AG04450 (cell line): ENCODE measurements at regions of chr11 and their contacts with region 1.

Region 1: DNA sequence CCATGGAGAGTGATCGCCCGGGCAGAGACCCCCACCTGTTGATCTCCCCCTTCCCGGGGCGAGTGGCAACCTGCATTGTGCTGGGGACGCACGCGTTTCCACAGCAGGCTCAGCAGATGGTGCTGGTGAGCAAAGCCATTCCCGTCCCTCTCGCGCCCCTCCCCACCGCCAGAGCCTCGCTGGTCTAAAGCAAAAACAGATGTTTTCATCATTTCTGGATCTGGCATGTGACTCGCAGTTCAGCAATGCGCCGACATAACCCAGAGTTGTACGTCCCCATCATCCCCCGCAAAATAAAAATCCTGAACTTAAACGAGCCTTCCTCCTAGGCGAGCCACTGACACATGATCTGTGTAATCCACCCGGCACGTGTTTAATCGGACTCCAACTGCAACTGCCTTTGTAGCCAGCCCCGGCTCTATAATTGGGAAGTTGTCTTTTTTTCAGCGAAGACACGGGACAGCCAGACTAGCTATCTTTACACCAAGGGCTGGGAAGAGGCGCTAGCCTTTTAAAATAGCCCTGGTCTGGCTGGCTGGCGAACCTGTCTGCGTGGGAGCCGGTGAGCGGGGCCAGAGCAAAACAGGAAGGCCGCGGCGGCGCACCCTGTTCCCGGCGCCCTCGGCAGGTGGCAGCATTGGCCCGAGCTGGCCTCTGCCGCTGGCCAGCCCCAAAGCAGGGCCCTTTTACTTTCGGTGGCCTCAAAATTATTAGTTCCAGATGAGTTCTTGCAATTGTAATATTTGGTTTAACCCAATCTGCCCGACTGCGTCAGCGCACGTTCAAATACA is 203.0 kb upstream of the SORL1-AS1 start:
- DNase-seq: peak; percentile 97
- H3K4me3 ChIP-seq: peak overlapping the region; percentile 57
- H3K27ac ChIP-seq: peak overlapping the region; percentile 100
- H3K27me3 ChIP-seq: no peaks in the 10 kb centered on the region
- CTCF ChIP-seq: peak; percentile 94

Region 2: DNA sequence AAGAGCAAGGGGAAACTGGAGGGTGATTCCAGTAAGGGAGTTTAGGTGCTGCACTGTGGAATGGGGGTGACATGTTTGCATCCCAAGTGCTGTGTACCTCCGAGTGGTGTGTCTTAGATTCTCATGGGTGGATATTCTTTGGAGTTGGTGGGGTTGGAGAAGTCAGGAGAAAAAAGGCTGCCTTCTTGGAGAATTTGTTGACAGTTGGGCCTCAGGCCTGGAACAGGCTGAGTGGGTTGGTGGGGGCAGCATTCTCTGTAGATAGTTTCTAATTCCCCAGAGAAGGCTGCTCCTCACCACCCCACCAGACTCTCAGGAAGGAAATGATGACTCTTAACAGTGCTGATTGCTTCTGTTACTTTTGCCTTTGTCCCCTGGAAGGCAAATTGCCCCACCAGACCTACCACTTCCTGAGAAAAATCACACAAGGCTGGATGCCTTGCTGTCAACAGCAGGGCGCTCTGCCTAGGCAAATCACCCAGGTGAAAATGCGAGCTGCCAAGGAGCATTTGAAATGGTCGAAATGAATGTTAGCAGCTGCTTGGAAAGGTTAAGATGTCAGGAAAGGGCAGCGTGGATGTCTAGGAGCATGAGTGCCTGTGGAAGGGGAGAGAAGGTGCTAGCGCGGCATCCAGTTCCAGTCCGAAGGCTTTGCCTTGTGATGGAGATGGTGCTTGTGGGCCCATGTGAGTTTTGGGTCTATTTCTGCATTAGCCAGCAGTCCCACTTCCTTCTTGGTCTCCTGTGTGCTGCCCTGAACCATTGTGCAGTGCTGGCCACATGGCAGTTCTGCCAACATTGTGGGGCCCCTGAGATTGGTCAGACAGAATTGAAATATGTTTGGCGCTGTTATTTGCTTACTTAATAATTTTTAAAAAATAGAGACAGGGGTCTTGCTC is 173.3 kb before region 1 on chr11:
- CTCF ChIA-PET with region 1: no interaction called
- POLR2A ChIA-PET with region 1: no interaction called
- DNase-seq: no peak
- H3K4me3 ChIP-seq: no peak overlapping the region
- H3K27ac ChIP-seq: no peak overlapping the region
- H3K27me3 ChIP-seq: peaks cover 7% of the 10 kb centered on the region
- CTCF ChIP-seq: no peak

Region 3: DNA sequence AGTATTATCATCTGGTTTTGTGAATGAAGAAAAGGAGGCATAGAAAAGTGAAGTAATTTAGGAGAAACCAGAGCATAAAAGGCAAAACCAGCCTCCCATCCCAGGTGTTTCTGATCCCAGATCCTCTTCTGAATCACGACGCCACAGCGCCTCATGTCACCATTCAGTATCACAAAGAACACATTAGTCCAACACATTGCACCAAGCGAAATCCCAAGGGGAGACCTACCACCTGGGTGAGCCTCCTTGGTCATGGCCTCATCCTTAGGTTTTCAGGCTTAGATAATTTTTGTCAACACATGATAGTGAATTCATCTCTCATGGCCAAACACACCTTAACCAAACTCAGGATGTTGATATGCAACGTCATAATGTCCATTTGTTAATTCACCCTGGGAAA is 21.5 kb before region 1 on chr11:
- CTCF ChIA-PET with region 1: interaction called, 17 read pairs
- POLR2A ChIA-PET with region 1: interaction called, 3 read pairs
- DNase-seq: no peak
- H3K4me3 ChIP-seq: no peak overlapping the region
- H3K27ac ChIP-seq: peak overlapping the region; percentile 12
- H3K27me3 ChIP-seq: no peaks in the 10 kb centered on the region
- CTCF ChIP-seq: no peak

Region 4: DNA sequence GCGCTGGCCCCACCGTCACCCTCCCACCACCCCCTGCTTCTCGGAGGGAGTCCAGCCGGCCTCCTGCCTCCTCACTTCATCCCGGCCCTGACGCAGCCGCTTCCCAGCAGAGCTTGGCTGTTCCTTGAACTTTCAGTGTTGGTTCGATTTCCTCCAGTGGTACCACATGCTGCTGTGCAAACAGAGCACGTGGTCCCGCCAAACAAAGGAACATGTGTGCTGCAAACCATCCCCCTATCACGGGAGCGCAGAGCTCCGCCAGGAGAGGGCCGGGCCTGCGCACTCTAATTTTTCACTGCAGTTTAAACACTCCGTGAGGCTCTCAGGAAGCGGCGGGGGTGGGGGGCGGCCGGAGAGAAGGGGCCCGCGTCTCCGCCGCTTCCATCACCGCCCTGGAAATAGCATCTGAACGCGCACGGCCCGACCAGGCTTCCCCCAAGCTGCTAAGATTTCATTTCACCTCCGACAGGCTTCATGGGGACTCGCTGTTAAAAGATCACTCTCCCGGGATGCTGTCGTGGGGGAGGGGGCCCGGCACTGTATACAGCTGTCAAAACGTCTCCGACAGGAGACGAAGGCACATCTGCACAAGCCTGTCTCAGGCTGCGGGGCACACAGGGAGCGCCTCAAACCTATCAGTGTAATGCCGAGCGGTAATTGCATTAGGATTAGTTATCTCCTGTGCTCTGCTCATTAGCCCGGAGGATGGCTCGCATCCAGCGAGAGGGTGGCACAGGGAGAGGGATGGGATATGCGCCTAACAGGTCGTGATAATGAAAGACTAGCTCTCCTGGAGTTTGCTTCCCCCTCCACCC is 66.9 kb after region 1 on chr11:
- CTCF ChIA-PET with region 1: interaction called, 12 read pairs
- POLR2A ChIA-PET with region 1: no interaction called
- DNase-seq: peak; percentile 76
- H3K4me3 ChIP-seq: peak overlapping the region; percentile 58
- H3K27ac ChIP-seq: peak overlapping the region; percentile 83
- H3K27me3 ChIP-seq: no peaks in the 10 kb centered on the region
- CTCF ChIP-seq: no peak

Region 5: GRCh38 chr11:121904148-121904547 is 248.4 kb after region 1 on chr11:
- CTCF ChIA-PET with region 1: no interaction called
- POLR2A ChIA-PET with region 1: no interaction called
- DNase-seq: no peak
- H3K4me3 ChIP-seq: no peak overlapping the region
- H3K27ac ChIP-seq: no peak overlapping the region
- H3K27me3 ChIP-seq: no peaks in the 10 kb centered on the region
- CTCF ChIP-seq: no peak

Region 6: GRCh38 chr11:122101625-122102291 is 446.0 kb after region 1 on chr11:
- CTCF ChIA-PET with region 1: interaction called, 37 read pairs
- POLR2A ChIA-PET with region 1: no interaction called
- DNase-seq: peak; percentile 53
- H3K4me3 ChIP-seq: peak overlapping the region; percentile 79
- H3K27ac ChIP-seq: peak overlapping the region; percentile 86
- H3K27me3 ChIP-seq: no peaks in the 10 kb centered on the region
- CTCF ChIP-seq: peak; percentile 68

Region 7: GRCh38 chr11:122115524-122116379 is 460.0 kb after region 1 on chr11 and contains the start of gene BLID:
- CTCF ChIA-PET with region 1: interaction called, 13 read pairs
- POLR2A ChIA-PET with region 1: no interaction called
- DNase-seq: no peak
- H3K4me3 ChIP-seq: no peak within 1 kb of the TSS
- H3K27ac ChIP-seq: peak within 1 kb of the TSS; percentile 33
- H3K27me3 ChIP-seq: no peaks in the 10 kb centered on the region
- CTCF ChIP-seq: peak; percentile 64
- polyA plus RNA-seq, gene BLID: 0.48 and 0.94 TPM in 2 replicates

Region 8: DNA sequence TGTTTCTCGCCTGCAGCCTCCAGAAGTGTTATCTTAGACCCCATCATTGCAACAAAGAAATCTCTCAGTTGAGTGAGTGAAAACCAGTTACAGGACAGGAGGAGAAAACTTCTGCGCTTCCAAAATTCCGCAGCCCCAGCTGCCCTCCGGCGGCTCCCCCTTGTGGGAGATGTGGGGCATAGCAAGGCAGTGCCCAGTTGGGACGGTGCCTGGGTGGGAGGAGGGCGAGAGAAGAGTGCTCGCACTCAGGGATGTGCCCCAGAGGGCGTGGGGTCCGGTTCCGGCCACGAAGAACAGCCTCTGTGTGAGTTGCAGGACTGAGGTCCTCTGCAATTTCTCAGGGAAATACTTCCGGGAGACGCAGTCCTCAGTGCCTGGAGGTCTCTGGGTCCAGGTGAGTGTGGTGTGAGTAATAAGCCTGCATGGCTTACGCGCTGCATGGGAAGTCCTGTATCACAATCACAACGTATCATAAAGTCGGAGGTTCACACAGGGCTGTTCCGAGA is 547.3 kb after region 1 on chr11:
- CTCF ChIA-PET with region 1: interaction called, 11 read pairs
- POLR2A ChIA-PET with region 1: interaction called, 8 read pairs
- DNase-seq: peak; percentile 48
- H3K4me3 ChIP-seq: peak overlapping the region; percentile 70
- H3K27ac ChIP-seq: peak overlapping the region; percentile 79
- H3K27me3 ChIP-seq: no peaks in the 10 kb centered on the region
- CTCF ChIP-seq: peak; percentile 99